RWPE1 (cell line): ENCODE measurements at regions of chr12 and their contacts with region 1.

Region 1: DNA sequence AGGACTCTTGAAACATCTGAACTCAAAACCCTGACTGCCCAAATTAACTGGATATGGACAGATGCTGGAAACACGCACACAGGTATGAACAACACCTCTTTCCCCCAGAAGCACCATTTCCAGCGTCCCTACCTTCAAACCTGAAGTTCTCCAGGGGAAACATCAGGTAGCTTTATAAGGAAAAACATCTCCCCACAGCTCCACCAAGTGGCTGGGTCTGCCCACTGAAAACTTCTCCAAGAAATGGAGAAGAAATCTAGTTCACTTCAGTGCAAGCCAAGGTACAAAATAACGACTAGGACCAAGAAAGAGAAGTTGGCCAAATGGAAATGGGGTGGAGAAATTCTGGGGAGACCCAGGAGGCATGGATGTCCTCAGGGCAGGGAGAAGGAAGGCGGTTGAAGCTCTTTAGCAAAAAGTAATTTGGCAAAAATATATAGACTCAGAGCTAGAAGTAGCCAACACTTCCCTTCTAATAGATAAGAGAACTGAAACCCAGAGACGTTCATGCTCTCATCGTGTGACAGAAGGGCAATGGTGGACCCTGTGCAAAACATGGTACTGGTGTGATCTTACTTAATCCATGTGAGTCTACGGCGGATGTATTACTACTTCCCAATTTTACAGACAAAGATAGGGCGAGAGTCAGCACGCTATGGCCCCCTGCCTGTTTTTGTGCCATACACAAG is 10.5 kb upstream of the NUAK1 start:
- DNase-seq: peak; percentile 42
- H3K27ac ChIP-seq: no peak overlapping the region
- CTCF ChIP-seq: peak; percentile 66

Region 2: GRCh38 chr12:105420659-105421240 is 728.5 kb before region 1 on chr12:
- CTCF ChIA-PET with region 1: interaction called, 15 read pairs
- POLR2A ChIA-PET with region 1: no interaction called
- DNase-seq: peak; percentile 60
- H3K27ac ChIP-seq: no peak overlapping the region
- CTCF ChIP-seq: peak; percentile 86

Region 3: DNA sequence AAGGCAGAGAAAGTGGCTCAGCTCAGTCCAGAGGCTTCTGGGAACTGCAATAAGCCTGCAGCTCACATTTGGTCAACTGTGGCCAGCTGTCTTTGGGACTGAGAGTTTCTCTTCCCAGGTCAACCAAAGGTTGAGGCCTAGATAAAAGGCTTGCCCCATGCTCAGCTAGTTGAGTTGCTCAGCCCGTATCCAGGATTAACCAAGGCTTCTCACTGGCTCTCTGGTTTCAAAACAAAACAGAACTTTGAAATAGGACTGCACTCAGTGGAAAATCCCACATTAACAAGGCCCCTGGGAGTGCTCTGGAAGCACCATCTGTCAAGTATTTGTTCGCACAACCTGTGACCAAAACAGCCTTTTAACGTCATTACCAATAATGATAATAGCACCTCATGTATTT is 29.8 kb after region 1 on chr12:
- CTCF ChIA-PET with region 1: no interaction called
- POLR2A ChIA-PET with region 1: no interaction called
- DNase-seq: no peak
- H3K27ac ChIP-seq: no peak overlapping the region
- CTCF ChIP-seq: no peak

Region 4: DNA sequence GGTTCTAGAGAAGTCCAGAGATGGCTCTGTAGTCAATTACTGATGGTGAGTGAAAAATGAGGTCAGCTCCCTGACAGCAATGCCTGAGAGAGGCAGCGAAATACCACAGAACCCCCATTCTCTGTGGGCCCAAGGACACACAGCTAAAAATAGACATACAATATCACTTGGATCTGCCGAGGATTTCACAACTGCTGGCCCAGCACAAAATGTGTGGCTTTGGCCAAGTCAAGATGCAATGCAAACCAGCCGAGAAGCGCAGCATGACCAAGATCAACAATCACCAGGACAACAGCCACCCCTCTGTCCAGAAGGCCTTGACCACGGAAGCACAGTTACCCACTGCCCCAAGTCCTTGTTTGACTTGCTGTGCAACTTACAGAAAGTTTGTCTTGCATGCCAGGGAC is 46.4 kb after region 1 on chr12:
- CTCF ChIA-PET with region 1: no interaction called
- POLR2A ChIA-PET with region 1: no interaction called
- DNase-seq: no peak
- H3K27ac ChIP-seq: no peak overlapping the region
- CTCF ChIP-seq: no peak